Right cardiac atrium (tissue), 5 donors: ENCODE measurements at regions of chr10 and their contacts with region 1.

Region 1: DNA sequence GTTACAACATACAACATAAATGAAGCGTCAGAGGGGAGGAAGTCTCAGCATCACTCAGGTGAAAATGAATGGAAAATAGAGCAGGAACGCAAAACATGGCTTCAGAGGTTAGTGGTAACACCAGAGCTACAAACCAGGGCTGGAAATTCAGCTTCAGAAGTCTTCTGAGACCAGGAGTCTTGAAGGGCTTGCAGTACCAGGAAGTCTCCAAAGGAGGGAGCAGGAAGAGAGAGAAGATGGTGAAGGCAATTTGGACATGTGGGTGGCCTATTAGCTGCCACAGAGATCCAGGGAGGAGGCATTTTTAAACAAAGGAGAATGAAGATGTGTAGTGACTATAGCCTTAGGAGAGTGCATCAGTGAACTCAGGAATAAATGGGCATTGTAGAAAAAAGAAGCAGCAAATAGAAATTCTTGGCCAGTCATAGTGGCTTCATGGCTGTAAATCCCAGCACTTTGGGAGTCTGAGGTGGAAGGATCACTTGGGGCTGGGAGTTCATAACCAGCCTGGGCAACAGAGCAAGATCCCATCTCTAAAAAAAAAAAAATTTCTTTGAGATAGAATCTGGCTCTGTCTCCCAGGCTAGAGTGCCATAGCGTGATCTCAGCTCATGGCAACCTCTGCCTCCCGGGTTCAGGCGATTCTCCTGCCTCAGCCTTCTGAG is 9.3 kb upstream of the TET1 start:
- DNase-seq: peak in 1 of 3 donors; percentile 22
- ATAC-seq: peak; percentile 64 to 77
- H3K4me3 ChIP-seq: no peak overlapping the region
- H3K27ac ChIP-seq: no peak overlapping the region
- H3K4me1 ChIP-seq: no peaks in the 10 kb centered on the region
- H3K27me3 ChIP-seq: no peaks in the 10 kb centered on the region

Region 2: DNA sequence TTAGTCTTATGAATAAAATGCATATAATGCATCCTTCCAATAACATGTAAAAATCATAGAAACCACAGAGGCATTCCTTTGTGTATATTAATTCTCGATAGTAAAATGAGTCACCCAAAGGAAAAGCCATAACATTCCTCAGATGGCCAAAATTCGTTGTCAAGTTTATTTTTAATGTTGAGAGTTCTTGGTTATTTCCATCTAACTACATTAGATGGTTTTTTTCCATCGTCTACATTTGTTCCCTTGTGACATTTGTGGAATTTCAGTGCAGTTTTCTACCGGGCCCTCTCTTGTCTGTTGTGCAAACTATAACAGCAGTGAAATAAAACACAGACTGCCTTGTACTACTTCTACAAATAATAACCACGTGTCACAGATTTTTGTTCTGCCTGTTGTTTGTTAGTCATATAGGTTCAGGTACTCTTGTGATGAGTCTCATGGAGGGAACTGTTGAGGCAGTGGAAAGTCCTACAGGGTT is 115.4 kb after region 1 on chr10:
- intact Hi-C with region 1: no loop called
- DNase-seq: no peak
- ATAC-seq: no peak
- H3K4me3 ChIP-seq: no peak overlapping the region
- H3K27ac ChIP-seq: no peak overlapping the region
- H3K4me1 ChIP-seq: no peaks in the 10 kb centered on the region
- H3K27me3 ChIP-seq: no peaks in the 10 kb centered on the region

Region 3: DNA sequence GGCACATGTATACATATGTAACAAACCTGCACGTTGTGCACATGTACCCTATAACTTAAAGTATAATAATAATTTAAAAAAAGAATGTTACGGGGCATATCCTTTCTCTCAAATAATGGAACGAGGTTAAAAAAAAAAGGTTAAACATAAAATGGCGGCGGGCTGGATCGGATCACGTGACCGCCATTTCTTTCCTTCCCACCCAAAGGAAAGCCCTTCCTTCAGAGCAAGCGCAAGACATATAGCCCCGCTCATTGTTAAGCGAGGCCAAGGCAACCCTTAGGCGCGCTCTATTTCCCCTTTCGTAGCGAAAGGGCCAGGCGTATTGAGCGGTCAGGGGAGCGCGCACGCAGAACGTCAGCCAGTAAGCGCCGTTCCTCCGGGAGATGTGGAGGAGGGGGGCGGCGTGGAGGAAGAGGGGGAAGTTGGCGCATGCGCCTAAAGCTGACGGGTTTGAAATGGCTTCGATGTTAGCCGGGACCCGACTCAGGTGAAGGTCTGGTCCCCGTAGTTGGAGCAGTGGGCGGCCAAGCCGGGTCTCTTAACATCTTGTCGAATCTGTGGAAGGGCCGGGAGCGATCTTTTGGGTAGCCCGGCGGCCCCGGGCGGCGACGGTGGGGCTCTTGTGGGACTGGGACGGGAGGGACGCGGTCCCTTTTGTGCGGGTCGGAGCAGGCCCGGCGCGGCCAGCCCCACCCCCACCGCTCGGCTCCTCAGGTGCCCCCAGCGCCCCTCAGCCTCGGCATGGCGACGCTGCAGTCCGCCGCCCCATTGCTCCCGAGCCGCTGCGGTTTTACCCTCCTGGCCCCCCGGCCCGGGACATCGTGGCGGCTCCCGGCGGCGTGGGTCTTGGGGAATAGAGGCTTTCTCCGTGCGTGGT is 170.2 kb after region 1 on chr10 and contains the start of gene CCAR1:
- intact Hi-C with region 1: loop called in 2 of 4 experiments (anchors 10 kb)
- DNase-seq: peak; percentile 98 to 99 (median 98)
- ATAC-seq: peak; percentile 99 to 100
- H3K4me3 ChIP-seq: peak within 1 kb of the TSS; percentile 89
- H3K27ac ChIP-seq: peak within 1 kb of the TSS; percentile 90
- H3K4me1 ChIP-seq: no peaks in the 10 kb centered on the region
- H3K27me3 ChIP-seq: no peaks in the 10 kb centered on the region
- total RNA-seq, gene CCAR1: 29.2 to 35.4 (median 33.9) TPM